Dendritic cell treated with granulocyte-macrophage colony-stimulating factor and Interleukin-4, amounts not matched to agents 40 ng/mL and 50 ng/mL, for 4 days (primary cell): ENCODE measurements at regions of chr4 and their contacts with region 1.

Region 1: DNA sequence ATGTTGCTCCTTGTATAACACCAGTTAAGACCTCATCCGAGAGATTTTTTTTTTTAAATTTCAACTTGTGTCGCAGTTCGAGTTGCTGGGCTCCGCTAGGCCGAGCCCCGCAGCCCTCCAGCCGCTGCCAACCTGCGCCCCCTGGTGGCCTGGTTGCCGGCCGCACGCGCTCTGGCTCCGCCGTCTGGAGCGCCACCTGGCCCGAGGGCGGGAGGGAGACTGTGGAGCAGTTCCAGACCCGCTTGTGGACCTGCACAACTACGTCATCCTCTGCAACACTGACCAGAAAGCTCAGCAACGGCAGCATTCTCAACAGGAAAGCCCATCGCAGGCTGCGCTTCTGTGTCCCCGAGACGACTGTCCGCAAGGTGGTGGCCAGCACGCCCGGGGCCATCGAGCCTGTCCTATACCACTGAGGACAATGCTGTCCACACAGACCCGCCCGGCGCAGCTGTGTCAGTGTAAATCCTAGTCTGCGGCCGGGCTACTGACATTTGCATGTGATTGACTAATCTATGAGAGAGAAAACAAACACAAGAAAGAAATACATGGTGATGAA is 39.1 kb downstream of the ARL9 start:
- H3K4me3 Mint-ChIP-seq: peak overlapping the region; percentile 68
- H3K27ac Mint-ChIP-seq: no peak overlapping the region
- H3K4me1 Mint-ChIP-seq: peaks cover 7% of the 10 kb centered on the region
- H3K27me3 Mint-ChIP-seq: peaks cover 16% of the 10 kb centered on the region

Region 2: GRCh38 chr4:56424697-56425514 is 119.7 kb before region 1 on chr4:
- intact Hi-C with region 1: loop called (anchors 1 kb)
- H3K4me3 Mint-ChIP-seq: no peak overlapping the region
- H3K27ac Mint-ChIP-seq: no peak overlapping the region
- H3K4me1 Mint-ChIP-seq: no peaks in the 10 kb centered on the region
- H3K27me3 Mint-ChIP-seq: no peaks in the 10 kb centered on the region